CD14-positive monocyte (primary cell): ENCODE measurements at regions of chr7 and their contacts with region 1.

Region 1: DNA sequence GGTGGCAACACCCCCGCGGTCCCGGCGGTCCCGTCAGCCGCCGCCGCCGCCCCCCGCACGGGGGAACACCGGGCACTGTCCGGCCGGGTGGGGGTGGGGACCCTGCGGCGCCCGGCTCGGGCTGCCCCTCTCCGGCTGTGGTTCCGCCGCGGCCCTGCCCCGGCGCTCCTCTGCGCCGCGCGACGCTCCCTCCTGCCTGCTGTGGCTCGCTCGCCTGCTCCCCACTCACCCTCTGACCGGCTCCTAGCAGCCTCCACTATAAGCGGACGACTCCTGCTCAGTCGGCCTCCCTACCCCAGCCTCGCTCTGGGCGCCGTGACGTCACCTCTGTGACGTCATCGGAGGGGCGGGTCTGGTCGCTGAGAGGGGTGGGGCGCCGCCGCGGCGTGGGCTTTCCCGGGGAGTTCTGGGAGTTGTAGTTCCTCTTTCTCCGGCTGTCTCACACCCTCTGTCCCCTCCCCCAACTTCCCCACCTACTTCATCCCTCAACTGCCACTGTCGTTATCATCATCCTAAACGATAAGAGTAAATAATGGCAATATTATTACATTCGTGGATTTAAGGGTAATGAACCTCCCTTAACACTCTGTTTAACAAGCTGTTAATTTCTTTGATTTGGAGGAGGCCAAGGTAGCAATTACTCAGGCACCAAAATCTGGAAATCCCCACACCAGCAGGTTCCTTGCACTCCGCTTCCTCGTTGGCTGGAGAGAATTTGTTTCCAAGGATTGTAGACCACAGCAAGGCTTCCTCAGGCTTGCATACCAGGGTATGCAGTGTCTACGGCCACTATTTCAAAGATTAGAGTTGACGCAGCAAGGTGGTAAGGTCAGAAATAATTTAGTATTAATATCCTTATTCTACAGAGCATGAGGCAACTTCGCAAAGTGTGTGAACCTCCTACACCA is at the start of gene UBE2H:
- DNase-seq: peak; percentile 84 to 95 (median 94)
- H3K4me3 ChIP-seq: peak within 1 kb of the TSS; percentile 89 to 96 (median 91)
- H3K4me3 Mint-ChIP-seq: peak within 1 kb of the TSS; percentile 94 to 98
- H3K27ac ChIP-seq: peak within 1 kb of the TSS; percentile 80 to 89
- H3K27ac Mint-ChIP-seq: peak within 1 kb of the TSS in 6 of 7 donors; percentile 97 to 100 (median 99)
- H3K4me1 ChIP-seq: peaks cover 34 to 37% of the 10 kb centered on the region in 2 donors
- H3K4me1 Mint-ChIP-seq: peaks cover 6% of the 10 kb centered on the region
- H3K27me3 ChIP-seq: no peaks in the 10 kb centered on the region
- H3K27me3 Mint-ChIP-seq: peaks cover 1 to 4% (median 2%) of the 10 kb centered on the region in 3 donors
- CTCF ChIP-seq: no peak
- polyA plus RNA-seq, gene UBE2H: 12.6 to 26.0 (median 16.0) TPM

Region 2: DNA sequence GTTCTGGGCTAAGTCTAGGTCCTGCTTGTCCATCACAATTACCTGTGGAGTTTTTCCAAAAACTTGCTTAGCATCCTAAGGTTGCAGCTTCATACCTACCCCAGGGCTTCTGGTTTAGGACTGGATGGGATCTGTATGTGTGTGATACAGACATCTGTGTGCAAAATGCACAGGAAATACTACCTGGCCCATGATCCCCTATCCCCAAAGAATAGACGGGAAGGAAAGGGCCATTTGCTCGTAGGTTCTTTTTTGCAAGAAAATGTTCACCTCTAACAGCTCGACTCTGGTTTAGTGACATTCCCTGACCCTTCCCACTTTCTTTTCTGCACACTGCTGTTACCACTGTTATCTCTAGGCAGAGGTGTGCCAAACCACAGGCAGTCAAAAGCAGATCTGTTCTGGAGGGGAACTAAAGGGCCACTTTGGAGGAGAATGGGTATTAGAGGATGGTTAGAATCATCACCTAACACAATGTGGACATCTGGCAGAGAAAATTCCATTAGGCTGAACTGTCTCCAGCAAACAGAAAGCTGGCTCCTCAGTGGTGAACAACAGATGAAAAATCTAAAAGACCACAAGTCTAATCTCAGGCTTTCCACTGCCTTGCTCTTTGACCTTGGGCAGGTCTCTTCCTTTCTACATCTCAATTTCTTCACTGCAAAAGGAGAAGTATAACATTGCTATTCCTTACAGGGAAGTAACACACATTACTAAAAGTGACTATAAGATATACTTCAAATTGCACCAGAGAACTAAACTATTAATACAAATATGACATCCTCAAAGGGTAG is 107.5 kb before region 1 on chr7:
- intact Hi-C with region 1: loop called in 1 of 2 experiments (anchors 10 kb)
- DNase-seq: peak; percentile 32 to 50 (median 49)
- H3K4me3 ChIP-seq: no peak overlapping the region
- H3K4me3 Mint-ChIP-seq: no peak overlapping the region
- H3K27ac ChIP-seq: peak overlapping the region in 1 of 2 donors; percentile 58
- H3K27ac Mint-ChIP-seq: peak overlapping the region; percentile 30 to 85 (median 73)
- H3K4me1 ChIP-seq: peaks cover 29 to 32% of the 10 kb centered on the region in 2 donors
- H3K4me1 Mint-ChIP-seq: peaks cover 34% of the 10 kb centered on the region
- H3K27me3 ChIP-seq: no peaks in the 10 kb centered on the region
- H3K27me3 Mint-ChIP-seq: no peaks in the 10 kb centered on the region
- CTCF ChIP-seq: no peak

Region 3: GRCh38 chr7:130010689-130011412 is 57.9 kb after region 1 on chr7:
- intact Hi-C with region 1: loop called in 1 of 2 experiments (anchors 5 kb)
- DNase-seq: peak; percentile 77 to 81 (median 81)
- H3K4me3 ChIP-seq: no peak overlapping the region
- H3K4me3 Mint-ChIP-seq: no peak overlapping the region
- H3K27ac ChIP-seq: no peak overlapping the region
- H3K27ac Mint-ChIP-seq: peak overlapping the region in 3 of 7 donors; percentile 47 to 80 (median 55)
- H3K4me1 ChIP-seq: no peaks in the 10 kb centered on the region
- H3K4me1 Mint-ChIP-seq: peaks cover 10% of the 10 kb centered on the region
- H3K27me3 ChIP-seq: no peaks in the 10 kb centered on the region
- H3K27me3 Mint-ChIP-seq: peaks cover 0 to 5% (median 1%) of the 10 kb centered on the region in 3 donors
- CTCF ChIP-seq: peak; percentile 87